Activated CD4-positive, alpha-beta memory T cell treated with anti-CD3 and anti-CD28 coated beads for 36 hours (primary cell): ENCODE measurements at regions of chr2 and their contacts with region 1.

Region 1: GRCh38 chr2:101900375-101900774 is 91.4 kb upstream of the IL1R2 start:
- DNase-seq: peak; percentile 88
- H3K4me3 Mint-ChIP-seq: peak overlapping the region; percentile 56
- H3K27ac Mint-ChIP-seq: peak overlapping the region; percentile 93
- H3K4me1 Mint-ChIP-seq: peaks cover 40% of the 10 kb centered on the region
- H3K27me3 Mint-ChIP-seq: peaks cover 15% of the 10 kb centered on the region

Region 2: GRCh38 chr2:101486258-101486701 is 414.1 kb before region 1 on chr2:
- CTCF ChIA-PET with region 1: no interaction called
- POLR2A ChIA-PET with region 1: no interaction called
- intact Hi-C with region 1: no loop called
- DNase-seq: peak; percentile 44
- H3K4me3 Mint-ChIP-seq: peak overlapping the region; percentile 5
- H3K27ac Mint-ChIP-seq: peak overlapping the region; percentile 34
- H3K4me1 Mint-ChIP-seq: peaks cover 17% of the 10 kb centered on the region
- H3K27me3 Mint-ChIP-seq: no peaks in the 10 kb centered on the region

Region 3: GRCh38 chr2:101790857-101791256 is 109.5 kb before region 1 on chr2:
- CTCF ChIA-PET with region 1: no interaction called
- POLR2A ChIA-PET with region 1: no interaction called
- intact Hi-C with region 1: no loop called
- DNase-seq: no peak
- H3K4me3 Mint-ChIP-seq: no peak overlapping the region
- H3K27ac Mint-ChIP-seq: no peak overlapping the region
- H3K4me1 Mint-ChIP-seq: peaks cover 52% of the 10 kb centered on the region
- H3K27me3 Mint-ChIP-seq: no peaks in the 10 kb centered on the region

Region 4: GRCh38 chr2:101912545-101912944 is 12.2 kb after region 1 on chr2:
- CTCF ChIA-PET with region 1: interaction called, 3 read pairs
- POLR2A ChIA-PET with region 1: no interaction called
- intact Hi-C with region 1: loop called (anchors 1 kb)
- DNase-seq: peak; percentile 72
- H3K4me3 Mint-ChIP-seq: no peak overlapping the region
- H3K27ac Mint-ChIP-seq: no peak overlapping the region
- H3K4me1 Mint-ChIP-seq: peaks cover 11% of the 10 kb centered on the region
- H3K27me3 Mint-ChIP-seq: peaks cover 17% of the 10 kb centered on the region

Region 5: DNA sequence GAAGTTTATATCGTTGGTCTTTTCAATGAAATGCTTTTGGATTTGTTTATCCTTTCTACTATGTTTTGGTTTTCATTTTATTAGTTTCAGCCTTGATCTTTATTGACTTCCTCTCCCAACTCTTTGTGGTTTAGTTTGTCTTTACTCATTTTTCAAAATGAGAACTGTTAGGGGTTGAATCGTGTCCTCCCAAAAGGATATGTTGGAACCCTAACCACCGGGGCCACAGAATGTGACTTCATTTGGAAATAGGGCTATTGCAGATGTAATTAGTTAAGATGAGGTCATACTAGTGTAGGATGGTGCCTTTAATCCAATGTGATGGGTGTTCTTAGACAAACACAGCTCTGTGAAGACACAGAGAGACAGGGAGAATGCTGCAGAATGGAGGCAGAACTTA is 31.0 kb after region 1 on chr2:
- CTCF ChIA-PET with region 1: no interaction called
- POLR2A ChIA-PET with region 1: no interaction called
- intact Hi-C with region 1: loop called (anchors 2 kb)
- DNase-seq: peak; percentile 25
- H3K4me3 Mint-ChIP-seq: no peak overlapping the region
- H3K27ac Mint-ChIP-seq: no peak overlapping the region
- H3K4me1 Mint-ChIP-seq: peaks cover 7% of the 10 kb centered on the region
- H3K27me3 Mint-ChIP-seq: peaks cover 11% of the 10 kb centered on the region

Region 6: DNA sequence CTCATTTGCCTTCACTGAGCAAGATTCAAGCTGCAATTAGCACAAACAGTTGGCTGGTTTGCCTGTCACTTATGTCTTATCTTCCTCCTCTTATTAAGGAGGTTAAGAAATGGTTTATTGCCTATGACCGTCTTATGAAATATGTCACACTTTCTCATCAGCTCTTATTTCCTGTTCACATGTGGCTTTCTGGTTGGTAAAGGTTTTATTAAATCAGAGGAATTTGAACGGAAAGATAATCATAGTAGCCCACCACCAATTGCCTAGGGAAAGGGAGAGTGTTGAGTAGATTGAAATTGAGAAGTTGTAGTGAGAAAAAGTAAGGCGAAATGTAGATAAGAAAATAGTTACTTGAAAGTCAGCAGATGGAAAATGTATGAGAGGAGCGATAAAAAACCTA is 238.0 kb after region 1 on chr2:
- CTCF ChIA-PET with region 1: no interaction called
- POLR2A ChIA-PET with region 1: no interaction called
- intact Hi-C with region 1: loop called (anchors 2 kb)
- DNase-seq: no peak
- H3K4me3 Mint-ChIP-seq: no peak overlapping the region
- H3K27ac Mint-ChIP-seq: peak overlapping the region; percentile 70
- H3K4me1 Mint-ChIP-seq: peaks cover 59% of the 10 kb centered on the region
- H3K27me3 Mint-ChIP-seq: peaks cover 24% of the 10 kb centered on the region

Region 7: GRCh38 chr2:102301867-102302362 is 401.5 kb after region 1 on chr2:
- CTCF ChIA-PET with region 1: no interaction called
- POLR2A ChIA-PET with region 1: no interaction called
- intact Hi-C with region 1: loop called (anchors 1 kb)
- DNase-seq: peak; percentile 65
- H3K4me3 Mint-ChIP-seq: peak overlapping the region; percentile 4
- H3K27ac Mint-ChIP-seq: peak overlapping the region; percentile 55
- H3K4me1 Mint-ChIP-seq: peaks cover 45% of the 10 kb centered on the region
- H3K27me3 Mint-ChIP-seq: peaks cover 4% of the 10 kb centered on the region

Region 8: DNA sequence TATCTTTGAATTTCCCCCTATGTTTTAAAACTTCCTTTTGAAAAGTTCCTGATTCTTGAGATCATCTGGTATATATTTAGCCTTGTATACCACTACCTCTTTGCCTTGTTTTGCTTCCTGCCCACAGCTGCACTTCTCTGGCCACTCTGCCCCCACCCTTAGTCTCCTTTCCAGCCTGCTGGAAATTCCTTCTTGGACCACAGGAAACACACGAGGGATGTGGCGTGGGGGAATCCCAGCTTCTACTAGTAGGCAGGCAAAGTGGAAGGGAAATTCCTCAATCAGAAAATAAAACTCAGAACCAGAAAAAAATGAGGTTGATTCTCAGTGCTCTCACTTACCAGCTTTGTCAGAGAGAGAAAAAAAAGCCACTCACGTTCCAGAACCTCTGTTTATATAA is 535.9 kb after region 1 on chr2:
- CTCF ChIA-PET with region 1: no interaction called
- POLR2A ChIA-PET with region 1: no interaction called
- intact Hi-C with region 1: loop called (anchors 2 kb)
- DNase-seq: peak; percentile 54
- H3K4me3 Mint-ChIP-seq: no peak overlapping the region
- H3K27ac Mint-ChIP-seq: peak overlapping the region; percentile 34
- H3K4me1 Mint-ChIP-seq: peaks cover 30% of the 10 kb centered on the region
- H3K27me3 Mint-ChIP-seq: no peaks in the 10 kb centered on the region